CD8-positive, alpha-beta T cell (primary cell): ENCODE measurements at regions of chr11 and their contacts with region 1.

Region 1: DNA sequence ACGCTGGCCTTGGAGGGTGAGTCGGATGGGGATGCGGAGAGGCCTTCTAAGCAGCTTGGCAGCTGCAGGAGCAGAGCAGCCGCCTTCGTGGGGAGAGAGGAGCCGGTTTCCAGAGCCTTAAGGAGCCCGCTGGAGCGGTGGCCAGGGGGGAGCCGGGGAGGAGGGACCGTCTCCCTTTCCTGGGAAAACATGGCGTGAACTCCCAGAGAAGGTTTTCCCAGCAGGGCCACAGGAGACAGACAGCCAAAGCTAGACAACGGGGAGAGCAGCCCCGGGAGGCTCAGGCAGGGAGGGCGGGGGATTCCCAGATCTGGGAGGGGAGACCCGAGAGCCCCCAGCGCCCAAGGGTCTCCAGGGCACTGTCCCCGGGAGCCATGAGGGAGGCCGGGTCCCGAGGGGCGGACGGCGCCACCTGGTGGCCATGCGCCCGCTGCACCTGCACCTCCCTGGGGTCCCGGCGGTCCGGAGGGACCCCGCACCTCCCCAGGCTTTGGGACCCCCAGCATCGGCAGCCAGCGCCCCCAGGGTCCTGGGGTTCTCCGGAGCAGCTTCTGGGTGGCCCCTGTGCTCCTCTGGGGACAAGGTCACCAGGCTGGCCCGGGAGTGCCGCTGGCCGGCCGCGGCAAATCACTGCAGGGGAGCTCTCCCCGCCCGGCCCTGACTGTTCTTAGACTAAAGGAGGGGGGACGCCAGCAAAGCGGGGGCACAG is 2.4 kb upstream of the SYT8 start:
- DNase-seq: peak; percentile 43 to 87 (median 70)
- ATAC-seq: peak; percentile 77
- H3K4me3 ChIP-seq: no peak overlapping the region
- H3K4me3 Mint-ChIP-seq: no peak overlapping the region
- H3K27ac ChIP-seq: no peak overlapping the region
- H3K27ac Mint-ChIP-seq: no peak overlapping the region
- H3K4me1 ChIP-seq: peaks cover 7% of the 10 kb centered on the region
- H3K4me1 Mint-ChIP-seq: no peaks in the 10 kb centered on the region
- H3K27me3 ChIP-seq: peaks cover 0 to 6% of the 10 kb centered on the region in 2 experiments
- H3K27me3 Mint-ChIP-seq: peaks cover 2% of the 10 kb centered on the region
- CTCF ChIP-seq: peak; percentile 95

Region 2: DNA sequence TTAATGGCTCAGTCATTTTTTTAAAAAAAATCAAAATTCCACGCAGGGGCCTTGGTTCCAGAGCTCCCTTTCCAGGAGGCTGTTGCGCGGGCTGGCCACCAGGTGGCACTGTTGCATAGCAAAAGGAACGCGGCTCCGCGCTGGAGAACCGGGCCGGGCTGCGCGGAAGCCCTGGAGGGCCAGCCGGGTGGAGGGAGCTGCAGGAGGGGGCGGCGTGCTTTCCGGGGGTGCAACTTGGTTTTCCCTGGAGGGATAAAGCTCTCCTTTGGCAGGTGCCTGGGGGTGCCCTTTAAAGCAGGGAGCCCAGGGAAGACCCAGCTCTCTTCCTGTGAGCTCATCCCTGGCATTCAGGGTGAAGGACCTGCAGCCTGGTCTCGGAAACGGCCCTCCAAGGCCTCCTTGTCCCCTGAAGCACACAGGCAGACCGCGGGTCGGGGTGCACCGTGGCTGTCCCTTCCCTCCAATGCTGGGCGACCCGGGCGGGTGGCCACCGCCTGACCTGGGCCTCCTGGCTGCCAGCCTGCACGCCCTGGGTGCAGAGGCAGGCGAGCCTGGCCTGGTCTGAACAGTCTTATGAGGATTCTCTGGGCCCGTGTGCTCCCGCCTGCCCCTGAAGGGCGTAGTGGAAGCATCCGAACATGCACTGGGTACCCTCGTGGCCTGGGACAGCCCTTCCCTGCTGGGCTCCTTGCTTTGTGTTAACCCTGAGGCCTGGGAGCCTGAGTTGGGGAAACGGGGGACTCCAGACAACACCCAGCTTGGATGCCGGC is 179.4 kb before region 1 on chr11:
- CTCF ChIA-PET with region 1: interaction called, 74 read pairs
- POLR2A ChIA-PET with region 1: no interaction called
- intact Hi-C with region 1: loop called in 1 of 2 experiments (anchors 1 kb)
- DNase-seq: peak; percentile 59 to 89 (median 79)
- ATAC-seq: peak; percentile 97
- H3K4me3 ChIP-seq: no peak overlapping the region
- H3K4me3 Mint-ChIP-seq: no peak overlapping the region
- H3K27ac ChIP-seq: no peak overlapping the region
- H3K27ac Mint-ChIP-seq: no peak overlapping the region
- H3K4me1 ChIP-seq: no peaks in the 10 kb centered on the region
- H3K4me1 Mint-ChIP-seq: no peaks in the 10 kb centered on the region
- H3K27me3 ChIP-seq: peaks cover 3 to 12% of the 10 kb centered on the region in 2 experiments
- H3K27me3 Mint-ChIP-seq: peaks cover 23% of the 10 kb centered on the region
- CTCF ChIP-seq: peak; percentile 99

Region 3: GRCh38 chr11:1757861-1758610 is 74.3 kb before region 1 on chr11:
- CTCF ChIA-PET with region 1: interaction called, 15 read pairs
- POLR2A ChIA-PET with region 1: interaction called, 3 read pairs
- intact Hi-C with region 1: no loop called
- DNase-seq: peak in 8 of 9 experiments; percentile 49 to 84 (median 67)
- ATAC-seq: peak; percentile 67
- H3K4me3 ChIP-seq: peak overlapping the region; percentile 46 to 53
- H3K4me3 Mint-ChIP-seq: peak overlapping the region; percentile 78
- H3K27ac ChIP-seq: peak overlapping the region; percentile 58 to 79
- H3K27ac Mint-ChIP-seq: peak overlapping the region; percentile 86
- H3K4me1 ChIP-seq: peaks cover 89% of the 10 kb centered on the region
- H3K4me1 Mint-ChIP-seq: peaks cover 76% of the 10 kb centered on the region
- H3K27me3 ChIP-seq: no peaks in the 10 kb centered on the region
- H3K27me3 Mint-ChIP-seq: no peaks in the 10 kb centered on the region
- CTCF ChIP-seq: no peak

Region 4: GRCh38 chr11:1796413-1797011 is 35.9 kb before region 1 on chr11:
- CTCF ChIA-PET with region 1: interaction called, 20 read pairs
- POLR2A ChIA-PET with region 1: no interaction called
- intact Hi-C with region 1: no loop called
- DNase-seq: no peak
- ATAC-seq: no peak
- H3K4me3 ChIP-seq: no peak overlapping the region
- H3K4me3 Mint-ChIP-seq: no peak overlapping the region
- H3K27ac ChIP-seq: no peak overlapping the region
- H3K27ac Mint-ChIP-seq: no peak overlapping the region
- H3K4me1 ChIP-seq: no peaks in the 10 kb centered on the region
- H3K4me1 Mint-ChIP-seq: peaks cover 4% of the 10 kb centered on the region
- H3K27me3 ChIP-seq: no peaks in the 10 kb centered on the region
- H3K27me3 Mint-ChIP-seq: peaks cover 10% of the 10 kb centered on the region
- CTCF ChIP-seq: no peak

Region 5: GRCh38 chr11:1845561-1846452 is 13.4 kb after region 1 on chr11:
- CTCF ChIA-PET with region 1: interaction called, 48 read pairs
- POLR2A ChIA-PET with region 1: interaction called, 7 read pairs
- intact Hi-C with region 1: no loop called
- DNase-seq: peak in 4 of 9 experiments; percentile 51 to 79 (median 60)
- ATAC-seq: peak; percentile 68
- H3K4me3 ChIP-seq: peak overlapping the region in 1 of 2 experiments; percentile 1
- H3K4me3 Mint-ChIP-seq: peak overlapping the region; percentile 80
- H3K27ac ChIP-seq: peak overlapping the region in 1 of 2 experiments; percentile 57
- H3K27ac Mint-ChIP-seq: peak overlapping the region; percentile 87
- H3K4me1 ChIP-seq: peaks cover 68% of the 10 kb centered on the region
- H3K4me1 Mint-ChIP-seq: peaks cover 61% of the 10 kb centered on the region
- H3K27me3 ChIP-seq: no peaks in the 10 kb centered on the region
- H3K27me3 Mint-ChIP-seq: no peaks in the 10 kb centered on the region
- CTCF ChIP-seq: no peak

Region 6: DNA sequence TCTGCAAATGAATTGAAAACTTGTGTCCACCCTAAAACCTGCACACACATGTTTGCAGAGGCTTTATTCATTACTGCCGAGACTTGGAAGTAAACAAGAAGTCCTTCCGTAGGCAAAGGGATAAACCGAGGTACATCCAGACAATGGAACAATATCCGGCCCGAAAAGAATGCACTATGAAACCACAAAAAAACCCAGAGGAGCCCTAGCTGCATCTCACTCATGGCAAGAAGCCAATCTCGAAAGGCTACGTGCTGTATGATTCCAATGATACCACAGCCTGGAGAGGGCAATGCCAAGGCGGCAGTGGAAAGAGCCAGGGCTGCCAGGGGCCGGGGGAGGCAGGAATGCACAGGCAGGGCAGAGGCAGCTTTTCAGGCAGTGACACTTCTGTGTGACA is 111.6 kb after region 1 on chr11:
- CTCF ChIA-PET with region 1: interaction called, 15 read pairs
- POLR2A ChIA-PET with region 1: no interaction called
- intact Hi-C with region 1: no loop called
- DNase-seq: peak in 1 of 9 experiments; percentile 40
- ATAC-seq: no peak
- H3K4me3 ChIP-seq: no peak overlapping the region
- H3K4me3 Mint-ChIP-seq: no peak overlapping the region
- H3K27ac ChIP-seq: no peak overlapping the region
- H3K27ac Mint-ChIP-seq: no peak overlapping the region
- H3K4me1 ChIP-seq: peaks cover 3% of the 10 kb centered on the region
- H3K4me1 Mint-ChIP-seq: peaks cover 5% of the 10 kb centered on the region
- H3K27me3 ChIP-seq: no peaks in the 10 kb centered on the region
- H3K27me3 Mint-ChIP-seq: no peaks in the 10 kb centered on the region
- CTCF ChIP-seq: no peak

Region 7: DNA sequence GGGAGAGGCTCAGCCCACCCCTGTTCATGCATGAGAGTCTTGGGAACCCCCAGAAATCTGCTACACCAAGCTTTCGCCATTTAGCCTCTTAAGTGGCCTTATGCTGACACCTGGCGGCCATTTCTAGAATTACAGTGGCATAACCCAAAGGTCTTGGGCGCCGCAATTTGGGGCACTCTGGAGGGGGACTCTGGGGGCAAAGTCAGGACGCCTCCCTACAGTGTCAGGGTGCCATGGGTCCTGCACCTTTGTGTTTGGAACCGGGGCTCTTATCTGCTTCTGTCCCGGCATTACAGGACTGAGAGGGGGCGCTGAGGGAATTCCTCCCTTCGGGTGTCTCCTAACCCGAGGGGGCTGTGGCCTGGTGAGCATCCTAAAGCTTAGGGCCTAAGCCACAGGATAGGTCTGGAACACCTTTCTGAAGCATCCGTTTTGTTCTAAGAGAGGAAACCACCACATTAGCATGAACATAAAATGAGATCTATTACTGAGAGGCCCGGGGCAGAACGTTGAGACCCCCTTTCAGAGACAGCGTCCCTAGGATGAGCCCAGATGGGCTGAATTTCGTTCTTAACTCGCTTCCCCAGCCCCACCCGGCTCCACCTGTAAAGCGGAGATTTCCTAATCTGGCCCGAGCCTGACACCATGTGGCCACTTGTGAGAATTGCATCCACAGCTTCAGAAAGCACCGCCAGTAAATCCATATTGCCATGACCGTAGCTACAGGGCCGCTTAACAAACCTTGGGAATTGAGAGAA is 319.3 kb after region 1 on chr11:
- CTCF ChIA-PET with region 1: interaction called, 60 read pairs
- POLR2A ChIA-PET with region 1: interaction called, 4 read pairs
- intact Hi-C with region 1: loop called in 1 of 2 experiments (anchors 1 kb)
- DNase-seq: peak; percentile 68 to 88 (median 82)
- ATAC-seq: peak; percentile 90
- H3K4me3 ChIP-seq: peak overlapping the region; percentile 14 to 18
- H3K4me3 Mint-ChIP-seq: peak overlapping the region; percentile 56
- H3K27ac ChIP-seq: peak overlapping the region in 1 of 2 experiments; percentile 45
- H3K27ac Mint-ChIP-seq: no peak overlapping the region
- H3K4me1 ChIP-seq: peaks cover 6% of the 10 kb centered on the region
- H3K4me1 Mint-ChIP-seq: peaks cover 6% of the 10 kb centered on the region
- H3K27me3 ChIP-seq: peaks cover 4 to 5% of the 10 kb centered on the region in 2 experiments
- H3K27me3 Mint-ChIP-seq: peaks cover 30% of the 10 kb centered on the region
- CTCF ChIP-seq: peak; percentile 74